Caco-2 (cell line): ENCODE measurements at regions of chr2 and their contacts with region 1.

Region 1: GRCh38 chr2:209690029-209690754 is 81.4 kb upstream of the UNC80 start:
- DNase-seq: no peak
- H3K4me3 ChIP-seq: no peak overlapping the region
- H3K4me3 Mint-ChIP-seq: no peak overlapping the region
- H3K27ac Mint-ChIP-seq: no peak overlapping the region
- H3K4me1 ChIP-seq: no peaks in the 10 kb centered on the region
- H3K4me1 Mint-ChIP-seq: no peaks in the 10 kb centered on the region
- H3K27me3 ChIP-seq: no peaks in the 10 kb centered on the region
- H3K27me3 Mint-ChIP-seq: peaks cover 16% of the 10 kb centered on the region
- CTCF ChIP-seq: no peak

Region 2: GRCh38 chr2:209638346-209638745 is 51.8 kb before region 1 on chr2:
- CTCF ChIA-PET with region 1: no interaction called
- POLR2A ChIA-PET with region 1: no interaction called
- intact Hi-C with region 1: loop called (anchors 2 kb)
- DNase-seq: no peak
- H3K4me3 ChIP-seq: no peak overlapping the region
- H3K4me3 Mint-ChIP-seq: no peak overlapping the region
- H3K27ac Mint-ChIP-seq: no peak overlapping the region
- H3K4me1 ChIP-seq: no peaks in the 10 kb centered on the region
- H3K4me1 Mint-ChIP-seq: no peaks in the 10 kb centered on the region
- H3K27me3 ChIP-seq: no peaks in the 10 kb centered on the region
- H3K27me3 Mint-ChIP-seq: peaks cover 3% of the 10 kb centered on the region
- CTCF ChIP-seq: no peak